Esophagus squamous epithelium (tissue), 5 donors: ENCODE measurements at regions of chr10 and their contacts with region 1.

Region 1: DNA sequence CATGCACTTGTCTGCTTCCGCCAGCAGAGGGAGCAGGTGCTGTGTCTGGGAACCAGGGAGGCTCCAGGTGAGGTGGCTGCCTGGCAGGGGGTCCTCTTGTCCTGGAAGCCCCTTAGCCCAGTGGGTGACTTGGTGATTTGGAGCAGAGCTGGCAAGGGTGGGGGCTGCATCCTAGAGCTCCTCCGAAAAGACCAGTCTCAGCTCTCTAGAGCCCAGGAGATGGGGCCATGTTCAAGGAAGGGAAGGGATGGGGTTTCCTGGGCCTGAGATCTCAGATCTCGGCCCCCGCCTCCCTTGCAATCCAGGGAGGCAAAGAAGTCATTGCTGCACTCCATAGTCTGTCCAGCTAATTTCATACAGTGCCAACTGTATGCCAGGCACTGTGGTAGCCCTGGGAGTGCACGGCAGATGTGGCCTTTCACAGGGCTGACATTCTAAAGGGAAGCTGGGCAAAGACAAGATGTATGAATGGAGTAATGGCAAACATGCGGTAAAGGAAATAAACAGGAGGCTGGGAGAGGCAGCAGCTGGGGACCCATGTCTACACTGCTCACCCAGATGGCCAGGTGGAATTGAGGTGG is 20.4 kb upstream of the SFRP5 start:
- DNase-seq: no peak
- H3K4me3 ChIP-seq: no peak overlapping the region
- H3K27ac ChIP-seq: no peak overlapping the region
- H3K4me1 ChIP-seq: peaks cover 0 to 8% (median 0%) of the 10 kb centered on the region in 3 donors
- H3K27me3 ChIP-seq: peaks cover 0 to 56% (median 0%) of the 10 kb centered on the region in 4 donors
- CTCF ChIP-seq: peak; percentile 45 to 90 (median 84)
- POLR2A ChIP-seq: no peak

Region 2: DNA sequence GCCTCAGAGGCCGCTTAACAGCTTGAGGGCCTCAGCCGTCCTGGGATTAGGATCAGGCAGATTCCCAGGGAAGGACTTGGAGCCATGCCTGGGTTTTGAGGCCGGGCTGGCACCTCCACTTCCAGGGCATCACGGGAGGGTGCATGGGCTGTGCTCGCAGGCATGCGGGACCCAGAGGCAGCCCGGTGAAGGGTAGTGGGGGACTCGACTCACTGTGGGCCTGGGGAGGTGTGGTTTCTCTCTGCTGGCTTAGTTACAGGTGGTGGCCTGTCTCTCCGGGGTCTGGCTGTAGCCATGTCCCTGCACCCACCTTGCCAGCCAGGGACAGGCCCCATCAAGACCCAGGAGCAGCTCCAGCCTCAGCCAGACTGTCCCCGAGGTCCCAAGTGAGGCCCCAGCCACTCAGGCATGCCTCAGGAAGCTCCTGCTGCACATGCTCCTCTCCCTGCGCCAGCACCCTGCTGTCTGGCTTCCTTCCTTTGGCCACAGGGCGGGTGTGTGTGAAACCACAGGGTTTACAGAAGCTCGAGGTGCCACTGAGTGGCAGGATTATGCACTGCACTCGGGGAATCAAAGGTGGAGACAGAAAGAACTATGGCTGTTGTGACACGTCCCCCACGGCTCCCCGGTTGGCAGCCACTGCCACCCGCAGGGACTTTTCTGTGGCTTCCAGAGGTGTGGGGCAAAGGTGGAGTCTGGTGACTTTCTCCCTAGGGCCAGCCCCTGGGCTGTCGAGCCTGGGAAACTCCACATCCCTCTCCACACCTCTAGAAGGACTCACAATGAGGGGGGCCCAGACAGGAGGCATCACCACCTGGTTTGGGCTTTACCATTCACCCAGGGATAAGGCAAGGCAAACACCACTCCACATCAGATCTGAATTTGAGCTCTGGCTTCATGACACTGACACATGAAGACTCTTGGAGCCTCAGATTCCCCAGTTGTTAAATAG is 77.1 kb after region 1 on chr10:
- intact Hi-C with region 1: loop called (anchors 2 kb)
- DNase-seq: peak; percentile 26
- H3K4me3 ChIP-seq: peak overlapping the region in 1 of 4 donors; percentile 28
- H3K27ac ChIP-seq: peak overlapping the region in 2 of 4 donors; percentile 33 to 65
- H3K4me1 ChIP-seq: peaks cover 0 to 37% (median 25%) of the 10 kb centered on the region in 3 donors
- H3K27me3 ChIP-seq: peaks cover 0 to 26% (median 0%) of the 10 kb centered on the region in 4 donors
- CTCF ChIP-seq: peak; percentile 54 to 97 (median 92)
- POLR2A ChIP-seq: no peak